Endothelial cell of umbilical vein (primary cell): ENCODE measurements at regions of chr7 and their contacts with region 1.

Region 1: DNA sequence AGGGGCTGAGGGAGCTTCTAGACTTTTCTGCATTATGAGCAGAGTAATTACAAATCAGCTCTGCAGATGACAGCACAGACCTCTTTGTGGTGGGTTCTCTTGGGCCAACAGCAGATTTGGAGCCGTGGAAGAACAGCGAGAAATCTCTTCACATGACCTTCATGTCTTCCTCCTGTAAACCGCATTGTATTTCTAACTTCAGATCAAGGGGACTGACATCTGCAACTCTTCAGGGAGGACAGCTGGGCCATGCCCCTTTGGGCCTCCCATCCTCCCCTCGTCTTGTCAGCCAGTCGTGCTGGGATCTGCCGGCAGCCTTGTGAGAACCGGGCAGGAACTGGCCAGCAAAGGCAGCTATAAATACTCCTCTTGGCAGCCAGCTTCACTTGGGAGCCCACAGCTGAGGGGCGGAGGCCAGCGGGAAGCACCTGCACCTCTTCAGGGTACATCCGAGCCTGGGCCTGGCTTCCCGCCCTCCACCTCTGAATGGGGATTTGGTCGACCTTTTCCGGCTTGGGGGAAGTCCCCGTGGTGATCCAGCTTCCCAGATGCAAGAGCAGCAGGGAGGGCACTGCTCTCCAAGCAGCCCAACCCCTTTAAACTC is 54.7 kb downstream of the STEAP1B start:
- DNase-seq: peak; percentile 99
- H3K4me3 ChIP-seq: no peak overlapping the region
- H3K27ac ChIP-seq: peak overlapping the region; percentile 92
- H3K4me1 ChIP-seq: peaks cover 50% of the 10 kb centered on the region
- H3K27me3 ChIP-seq: no peaks in the 10 kb centered on the region
- CTCF ChIP-seq: no peak
- POLR2A ChIP-seq: peak; percentile 71

Region 2: DNA sequence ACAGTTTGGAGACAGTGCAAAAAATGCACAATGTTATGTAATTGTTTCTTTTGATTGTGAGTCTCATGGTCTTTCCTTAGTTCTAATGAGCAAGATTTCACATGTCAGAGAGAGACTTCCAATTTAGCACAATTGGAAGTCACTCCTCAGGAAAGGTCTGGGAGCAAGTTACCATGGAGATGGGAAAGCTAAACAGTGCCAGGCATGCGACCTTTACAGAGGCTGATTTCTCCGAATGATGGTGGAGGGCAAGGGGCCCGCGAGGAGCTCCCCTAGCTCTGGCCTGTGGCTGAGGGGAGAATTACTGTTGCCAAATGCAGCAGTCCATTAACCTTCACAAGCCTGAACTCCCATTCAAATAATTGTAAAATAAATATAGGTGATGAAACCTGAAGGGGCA is 558.8 kb before region 1 on chr7:
- CTCF ChIA-PET with region 1: no interaction called
- POLR2A ChIA-PET with region 1: no interaction called
- dilution Hi-C with region 1: no loop called
- intact Hi-C with region 1: no loop called
- DNase-seq: no peak
- H3K4me3 ChIP-seq: no peak overlapping the region
- H3K27ac ChIP-seq: no peak overlapping the region
- H3K4me1 ChIP-seq: no peaks in the 10 kb centered on the region
- H3K27me3 ChIP-seq: no peaks in the 10 kb centered on the region
- CTCF ChIP-seq: no peak
- POLR2A ChIP-seq: no peak

Region 3: DNA sequence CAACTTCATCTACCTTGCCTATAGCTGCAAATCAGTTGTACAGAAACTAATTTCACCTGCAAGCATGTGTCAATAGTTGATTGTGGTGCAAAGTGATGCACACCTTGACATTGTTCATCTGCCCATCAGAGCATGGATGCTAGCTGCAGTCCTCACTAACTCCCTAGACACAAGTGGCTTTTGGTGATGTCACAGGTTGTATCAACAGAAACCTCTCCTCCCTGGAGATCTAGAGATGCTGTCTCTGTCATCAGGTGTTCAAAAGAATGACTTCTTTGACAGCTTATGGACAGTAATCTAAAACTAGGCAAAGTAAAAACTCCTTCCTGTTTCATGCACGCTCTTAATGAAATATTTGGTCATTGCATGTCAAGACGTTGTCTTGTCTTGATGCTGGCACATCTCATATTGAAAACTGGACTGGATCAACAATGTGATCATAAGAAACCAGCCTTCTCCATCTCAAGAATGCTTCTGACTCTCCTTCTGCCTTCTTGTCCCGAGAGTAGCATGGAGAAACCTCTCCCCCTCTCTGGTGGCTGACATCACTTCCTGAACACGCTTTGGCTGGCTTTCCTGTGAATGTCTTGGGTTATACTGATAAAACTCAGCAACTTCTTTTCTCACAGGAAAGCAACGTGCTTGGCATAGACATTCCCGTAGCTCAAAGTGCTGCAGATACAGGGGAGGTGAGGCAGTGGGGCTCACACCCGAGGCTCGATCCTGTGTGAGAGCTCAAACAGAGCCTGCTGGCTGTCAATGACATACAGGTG is 323.4 kb before region 1 on chr7:
- CTCF ChIA-PET with region 1: interaction called, 4 read pairs
- POLR2A ChIA-PET with region 1: no interaction called
- dilution Hi-C with region 1: loop called (anchors 25 kb)
- intact Hi-C with region 1: loop called (anchors 1 kb)
- DNase-seq: peak; percentile 96
- H3K4me3 ChIP-seq: no peak overlapping the region
- H3K27ac ChIP-seq: peak overlapping the region; percentile 87
- H3K4me1 ChIP-seq: peaks cover 50% of the 10 kb centered on the region
- H3K27me3 ChIP-seq: no peaks in the 10 kb centered on the region
- CTCF ChIP-seq: no peak
- POLR2A ChIP-seq: peak; percentile 29

Region 4: DNA sequence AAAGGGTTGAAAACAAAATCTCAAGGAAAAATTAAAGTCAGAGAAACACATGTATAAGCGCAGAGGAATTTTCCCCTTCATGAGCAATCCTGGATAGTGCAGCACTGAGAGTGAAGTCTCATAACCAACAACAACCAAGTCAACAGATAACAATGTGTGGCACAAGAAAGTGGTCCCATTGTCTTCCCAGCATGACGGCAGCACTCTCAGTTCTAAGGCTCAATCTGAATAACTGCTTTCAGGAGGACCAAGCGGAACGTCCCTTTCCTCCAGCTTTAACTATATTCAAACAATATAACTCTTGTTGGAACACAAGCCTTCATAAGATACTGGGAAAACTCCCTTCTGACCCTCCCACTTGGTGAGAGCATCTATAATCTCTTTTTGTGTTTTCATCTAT is 226.2 kb before region 1 on chr7:
- CTCF ChIA-PET with region 1: interaction called, 4 read pairs
- POLR2A ChIA-PET with region 1: interaction called, 3 read pairs
- dilution Hi-C with region 1: no loop called
- intact Hi-C with region 1: loop called (anchors 1 kb)
- DNase-seq: peak; percentile 87
- H3K4me3 ChIP-seq: peak overlapping the region; percentile 41 to 85 (median 73)
- H3K27ac ChIP-seq: peak overlapping the region; percentile 98
- H3K4me1 ChIP-seq: peaks cover 60% of the 10 kb centered on the region
- H3K27me3 ChIP-seq: no peaks in the 10 kb centered on the region
- CTCF ChIP-seq: no peak
- POLR2A ChIP-seq: peak; percentile 63

Region 5: DNA sequence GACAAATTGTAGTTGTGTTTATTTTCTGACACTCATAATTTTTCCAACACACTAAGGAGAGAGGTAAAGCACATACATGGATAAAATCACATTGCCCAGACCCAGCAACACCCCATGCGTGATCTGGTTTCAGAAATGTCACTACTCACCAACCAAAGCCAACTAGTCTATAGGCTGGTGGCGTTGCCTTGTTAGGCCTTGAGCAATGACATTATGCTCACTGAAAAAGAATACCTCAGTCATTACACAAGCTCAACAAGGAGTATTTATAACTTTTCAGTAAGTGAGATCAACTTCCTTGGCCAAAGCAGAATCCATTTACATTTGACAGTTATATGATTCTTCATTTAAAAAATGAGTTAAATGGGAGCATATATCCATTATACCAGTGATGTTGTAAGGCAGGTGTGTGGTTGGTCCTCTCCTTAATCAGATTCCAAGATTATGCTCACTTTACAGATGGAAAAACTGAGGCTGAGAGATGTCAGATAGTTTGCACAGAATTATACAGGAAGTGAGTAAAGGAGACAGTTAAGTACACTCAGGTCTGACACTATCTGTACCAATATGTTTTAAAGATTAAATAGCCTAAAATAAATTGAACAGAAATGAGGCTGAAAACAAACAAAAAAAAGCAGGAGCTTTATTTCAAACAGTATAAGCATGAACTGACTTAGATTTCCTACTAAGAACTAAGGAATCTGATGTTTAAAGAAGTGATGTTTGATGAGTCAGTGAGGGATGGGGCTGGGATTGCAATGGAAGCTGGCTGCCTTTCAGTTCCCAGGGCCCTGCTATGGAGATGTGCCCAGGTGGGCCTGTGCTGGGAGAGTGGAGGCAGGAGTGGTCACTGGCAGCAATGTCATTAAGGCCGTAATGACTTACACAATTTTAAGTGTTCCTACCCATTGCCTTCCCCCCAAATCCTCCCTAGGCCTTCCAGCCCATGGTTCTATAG is 206.6 kb before region 1 on chr7:
- CTCF ChIA-PET with region 1: no interaction called
- POLR2A ChIA-PET with region 1: no interaction called
- dilution Hi-C with region 1: no loop called
- intact Hi-C with region 1: no loop called
- DNase-seq: no peak
- H3K4me3 ChIP-seq: no peak overlapping the region
- H3K27ac ChIP-seq: no peak overlapping the region
- H3K4me1 ChIP-seq: no peaks in the 10 kb centered on the region
- H3K27me3 ChIP-seq: no peaks in the 10 kb centered on the region
- CTCF ChIP-seq: no peak
- POLR2A ChIP-seq: no peak

Region 6: DNA sequence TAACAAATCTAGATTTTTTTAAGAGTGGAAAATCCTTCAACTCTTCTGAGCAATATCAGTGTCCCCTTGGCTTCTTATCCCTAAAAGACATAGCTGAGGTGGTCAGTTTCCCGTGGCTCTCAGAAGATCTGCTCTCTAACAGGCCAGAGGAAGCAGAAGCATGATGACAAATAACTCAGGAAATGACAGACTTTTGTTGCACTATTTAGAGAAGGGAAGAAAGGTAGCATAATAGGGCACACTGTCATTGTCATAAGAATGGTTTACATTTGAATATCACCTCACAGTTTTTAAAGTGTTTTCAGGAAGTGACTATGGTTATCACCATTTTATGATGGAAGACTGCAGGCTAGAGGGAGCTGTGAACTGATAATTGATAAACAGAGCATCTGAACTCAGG is 54.7 kb before region 1 on chr7:
- CTCF ChIA-PET with region 1: no interaction called
- POLR2A ChIA-PET with region 1: no interaction called
- dilution Hi-C with region 1: no loop called
- intact Hi-C with region 1: loop called (anchors 2 kb)
- DNase-seq: peak; percentile 23
- H3K4me3 ChIP-seq: no peak overlapping the region
- H3K27ac ChIP-seq: peak overlapping the region; percentile 28
- H3K4me1 ChIP-seq: peaks cover 14% of the 10 kb centered on the region
- H3K27me3 ChIP-seq: no peaks in the 10 kb centered on the region
- CTCF ChIP-seq: no peak
- POLR2A ChIP-seq: no peak

Region 7: GRCh38 chr7:22481726-22482125 is 36.5 kb after region 1 on chr7:
- CTCF ChIA-PET with region 1: interaction called, 14 read pairs
- POLR2A ChIA-PET with region 1: interaction called, 10 read pairs
- dilution Hi-C with region 1: no loop called
- intact Hi-C with region 1: loop called (anchors 1 kb)
- DNase-seq: peak; percentile 79
- H3K4me3 ChIP-seq: no peak overlapping the region
- H3K27ac ChIP-seq: peak overlapping the region; percentile 84
- H3K4me1 ChIP-seq: peaks cover 56% of the 10 kb centered on the region
- H3K27me3 ChIP-seq: no peaks in the 10 kb centered on the region
- CTCF ChIP-seq: no peak
- POLR2A ChIP-seq: no peak

Region 8: GRCh38 chr7:22660732-22661131 is 215.5 kb after region 1 on chr7:
- CTCF ChIA-PET with region 1: no interaction called
- POLR2A ChIA-PET with region 1: no interaction called
- dilution Hi-C with region 1: no loop called
- intact Hi-C with region 1: loop called (anchors 10 kb)
- DNase-seq: no peak
- H3K4me3 ChIP-seq: no peak overlapping the region
- H3K27ac ChIP-seq: no peak overlapping the region
- H3K4me1 ChIP-seq: peaks cover 23% of the 10 kb centered on the region
- H3K27me3 ChIP-seq: no peaks in the 10 kb centered on the region
- CTCF ChIP-seq: peak in 1 of 2 donors; percentile 33
- POLR2A ChIP-seq: no peak